ENCODE measurements at regions of chr14 and their contacts with region 1.

Region 1: DNA sequence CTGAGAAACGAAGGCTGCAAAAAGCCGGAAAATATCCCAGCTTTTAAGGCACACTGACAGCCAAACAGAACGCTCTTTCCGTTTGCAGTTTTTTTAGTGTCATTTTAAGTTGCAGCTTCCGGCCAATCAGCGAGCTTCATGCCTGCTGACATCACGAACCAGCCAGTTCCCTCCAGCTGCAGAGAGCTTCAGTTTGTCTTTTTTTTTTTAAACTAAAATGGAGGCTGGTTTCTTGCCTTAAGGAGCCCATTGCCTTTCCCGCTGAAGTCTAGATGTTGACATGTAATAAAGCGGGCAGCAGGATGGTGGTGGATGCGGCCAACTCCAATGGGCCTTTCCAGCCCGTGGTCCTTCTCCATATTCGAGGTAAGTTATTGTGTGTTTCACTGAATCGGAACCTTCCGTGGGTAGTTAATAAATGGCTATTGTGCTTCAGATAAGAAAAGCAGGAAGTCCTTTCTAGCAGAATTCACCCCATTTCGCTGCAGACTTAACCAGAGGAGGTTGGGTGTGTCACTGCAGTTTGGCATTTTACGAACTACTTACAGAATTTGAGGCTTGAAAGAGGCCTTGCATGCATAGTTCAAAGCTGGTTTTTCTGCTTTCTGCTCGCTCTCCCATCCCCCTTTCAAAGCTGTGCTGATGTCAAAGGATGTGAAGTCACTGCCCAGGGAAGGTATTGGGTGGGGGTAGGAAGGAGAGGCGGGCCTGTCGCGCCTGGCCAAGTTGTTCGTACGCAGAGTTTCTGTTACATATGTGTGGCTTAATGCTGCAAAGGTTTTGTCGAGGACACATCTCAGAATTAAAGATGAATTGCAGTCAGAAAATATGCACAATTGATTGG is 48.4 kb downstream of the PPP2R5C start:
- DNase-seq: peak; percentile 61 to 96 (median 90)
- ATAC-seq: peak; percentile 88 to 89 (median 88)
- H3K4me3 ChIP-seq: peak overlapping the region; percentile 69 to 74
- H3K4me3 Mint-ChIP-seq: peak overlapping the region; percentile 92 to 94 (median 94)
- H3K27ac ChIP-seq: peak overlapping the region; percentile 97
- H3K27ac Mint-ChIP-seq: peak overlapping the region; percentile 98 to 100
- H3K4me1 ChIP-seq: peaks cover 32 to 41% of the 10 kb centered on the region in 2 experiments
- H3K4me1 Mint-ChIP-seq: peaks cover 49 to 59% (median 52%) of the 10 kb centered on the region in 3 donors
- H3K27me3 ChIP-seq: no peaks in the 10 kb centered on the region
- H3K27me3 Mint-ChIP-seq: no peaks in the 10 kb centered on the region

Region 2: GRCh38 chr14:101721951-101722661 is 87.8 kb before region 1 on chr14:
- CTCF ChIA-PET with region 1: interaction called, 3 to 4 read pairs
- POLR2A ChIA-PET with region 1: interaction called, 6 to 12 read pairs
- DNase-seq: peak; percentile 52 to 94 (median 84)
- ATAC-seq: peak; percentile 83 to 87 (median 84)
- H3K4me3 ChIP-seq: peak overlapping the region; percentile 30 to 42
- H3K4me3 Mint-ChIP-seq: peak overlapping the region; percentile 75 to 78 (median 78)
- H3K27ac ChIP-seq: peak overlapping the region; percentile 99
- H3K27ac Mint-ChIP-seq: peak overlapping the region; percentile 99 to 100
- H3K4me1 ChIP-seq: peaks cover 18 to 67% of the 10 kb centered on the region in 2 experiments
- H3K4me1 Mint-ChIP-seq: peaks cover 56 to 73% (median 59%) of the 10 kb centered on the region in 3 donors
- H3K27me3 ChIP-seq: no peaks in the 10 kb centered on the region
- H3K27me3 Mint-ChIP-seq: no peaks in the 10 kb centered on the region

Region 3: GRCh38 chr14:101767618-101768362 is 42.1 kb before region 1 on chr14:
- CTCF ChIA-PET with region 1: interaction called in 1 of 2 experiments, 21 read pairs
- POLR2A ChIA-PET with region 1: interaction called, 3 to 11 read pairs
- DNase-seq: no peak
- ATAC-seq: no peak
- H3K4me3 ChIP-seq: no peak overlapping the region
- H3K4me3 Mint-ChIP-seq: no peak overlapping the region
- H3K27ac ChIP-seq: no peak overlapping the region
- H3K27ac Mint-ChIP-seq: no peak overlapping the region
- H3K4me1 ChIP-seq: peaks cover 0 to 24% of the 10 kb centered on the region in 2 experiments
- H3K4me1 Mint-ChIP-seq: peaks cover 29 to 54% (median 49%) of the 10 kb centered on the region in 3 donors
- H3K27me3 ChIP-seq: no peaks in the 10 kb centered on the region
- H3K27me3 Mint-ChIP-seq: no peaks in the 10 kb centered on the region

Region 4: DNA sequence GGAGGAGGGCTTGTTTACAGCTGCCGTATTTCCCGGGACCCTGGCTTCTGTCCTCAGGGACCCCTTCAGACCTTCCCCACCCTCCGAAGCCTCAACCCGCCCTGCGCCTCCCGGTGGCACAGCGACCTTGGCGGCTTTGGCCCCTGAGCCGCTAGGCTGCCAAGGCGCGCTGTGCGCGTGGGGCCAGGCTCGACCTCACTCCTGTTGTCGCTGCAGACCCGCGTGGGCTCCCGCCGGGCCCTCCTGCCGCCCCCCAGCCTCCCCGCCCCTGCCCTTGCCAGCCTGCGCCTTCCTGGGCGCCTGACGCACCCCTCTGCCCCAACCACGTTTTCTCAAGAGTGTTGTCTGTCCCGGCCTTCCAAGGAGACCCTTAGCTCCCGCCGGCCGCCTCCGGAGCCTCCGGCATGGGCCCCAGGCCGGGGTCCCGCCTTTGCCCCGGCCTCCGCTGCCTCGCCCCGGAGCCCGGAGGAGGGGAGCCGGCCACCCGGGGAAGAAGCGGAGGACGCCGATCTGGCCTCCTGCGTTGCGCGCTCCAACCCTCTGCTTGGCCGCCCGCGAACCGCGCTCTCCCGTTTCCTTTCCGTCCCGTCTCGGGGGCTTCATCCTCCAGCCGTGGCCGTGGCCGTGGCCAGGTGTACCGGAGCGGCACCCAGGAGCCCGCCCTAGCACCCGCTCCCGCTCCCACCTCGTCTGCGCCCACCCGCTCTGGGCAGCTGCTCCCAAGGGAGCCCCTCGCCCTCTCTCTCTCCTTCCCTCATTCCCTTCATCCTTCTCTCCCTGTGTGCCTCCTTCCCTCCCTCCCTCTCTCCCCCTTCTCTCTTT is 28.4 kb before region 1 on chr14:
- CTCF ChIA-PET with region 1: interaction called in 1 of 2 experiments, 5 read pairs
- POLR2A ChIA-PET with region 1: interaction called, 5 to 10 read pairs
- DNase-seq: peak in 20 of 35 experiments; percentile 9 to 48 (median 20)
- ATAC-seq: peak; percentile 69 to 74 (median 72)
- H3K4me3 ChIP-seq: peak overlapping the region; percentile 61 to 64
- H3K4me3 Mint-ChIP-seq: peak overlapping the region; percentile 65 to 76 (median 70)
- H3K27ac ChIP-seq: no peak overlapping the region
- H3K27ac Mint-ChIP-seq: no peak overlapping the region
- H3K4me1 ChIP-seq: peaks cover 0 to 16% of the 10 kb centered on the region in 2 experiments
- H3K4me1 Mint-ChIP-seq: peaks cover 33 to 44% (median 39%) of the 10 kb centered on the region in 3 donors
- H3K27me3 ChIP-seq: peaks cover 3 to 5% of the 10 kb centered on the region in 2 experiments
- H3K27me3 Mint-ChIP-seq: peaks cover 0 to 6% of the 10 kb centered on the region in 2 donors

Region 5: GRCh38 chr14:101823511-101824120 is 13.7 kb after region 1 on chr14:
- CTCF ChIA-PET with region 1: interaction called, 3 to 37 read pairs
- POLR2A ChIA-PET with region 1: interaction called, 41 to 277 read pairs
- DNase-seq: peak in 34 of 35 experiments; percentile 28 to 86 (median 64)
- ATAC-seq: peak; percentile 66 to 68 (median 67)
- H3K4me3 ChIP-seq: peak overlapping the region; percentile 60 to 70
- H3K4me3 Mint-ChIP-seq: peak overlapping the region; percentile 81 to 91 (median 88)
- H3K27ac ChIP-seq: peak overlapping the region; percentile 99
- H3K27ac Mint-ChIP-seq: peak overlapping the region; percentile 97
- H3K4me1 ChIP-seq: peaks cover 62 to 67% of the 10 kb centered on the region in 2 experiments
- H3K4me1 Mint-ChIP-seq: peaks cover 68 to 88% (median 77%) of the 10 kb centered on the region in 3 donors
- H3K27me3 ChIP-seq: no peaks in the 10 kb centered on the region
- H3K27me3 Mint-ChIP-seq: no peaks in the 10 kb centered on the region

Region 6: DNA sequence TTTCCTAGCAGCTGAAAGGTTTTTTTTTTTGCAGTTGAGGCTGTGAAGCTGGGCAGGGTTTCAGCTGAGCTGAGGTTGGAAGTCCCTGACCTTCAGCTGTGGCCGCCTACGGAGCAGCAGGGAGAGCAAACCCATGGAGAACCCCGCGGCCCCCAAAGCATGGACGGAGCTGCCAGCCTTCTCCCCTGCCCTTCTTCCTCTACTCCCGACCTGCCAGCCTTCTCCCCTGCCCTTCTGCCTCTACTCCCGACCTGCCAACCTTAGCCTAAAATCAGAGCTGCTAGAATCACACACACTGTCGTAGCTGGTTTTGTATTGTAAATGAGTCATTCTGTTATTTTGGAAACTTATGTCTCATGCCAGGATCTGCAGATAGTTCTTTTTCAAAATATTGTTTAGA is 26.2 kb after region 1 on chr14:
- CTCF ChIA-PET with region 1: interaction called in 1 of 2 experiments, 3 read pairs
- POLR2A ChIA-PET with region 1: interaction called, 5 to 27 read pairs
- DNase-seq: no peak
- ATAC-seq: no peak
- H3K4me3 ChIP-seq: no peak overlapping the region
- H3K4me3 Mint-ChIP-seq: peak overlapping the region in 1 of 3 donors; percentile 9
- H3K27ac ChIP-seq: peak overlapping the region; percentile 4
- H3K27ac Mint-ChIP-seq: peak overlapping the region; percentile 67 to 72
- H3K4me1 ChIP-seq: peaks cover 23 to 86% of the 10 kb centered on the region in 2 experiments
- H3K4me1 Mint-ChIP-seq: peaks cover 95 to 98% (median 95%) of the 10 kb centered on the region in 3 donors
- H3K27me3 ChIP-seq: no peaks in the 10 kb centered on the region
- H3K27me3 Mint-ChIP-seq: no peaks in the 10 kb centered on the region

Region 7: GRCh38 chr14:102255401-102256190 is 445.7 kb after region 1 on chr14:
- CTCF ChIA-PET with region 1: no interaction called
- POLR2A ChIA-PET with region 1: no interaction called
- DNase-seq: no peak
- ATAC-seq: no peak
- H3K4me3 ChIP-seq: no peak overlapping the region
- H3K4me3 Mint-ChIP-seq: no peak overlapping the region
- H3K27ac ChIP-seq: no peak overlapping the region
- H3K27ac Mint-ChIP-seq: no peak overlapping the region
- H3K4me1 ChIP-seq: no peaks in the 10 kb centered on the region
- H3K4me1 Mint-ChIP-seq: no peaks in the 10 kb centered on the region
- H3K27me3 ChIP-seq: peaks cover 0 to 8% of the 10 kb centered on the region in 2 experiments
- H3K27me3 Mint-ChIP-seq: no peaks in the 10 kb centered on the region

Region 8: GRCh38 chr14:102396521-102396920 is 586.6 kb after region 1 on chr14:
- CTCF ChIA-PET with region 1: no interaction called
- POLR2A ChIA-PET with region 1: interaction called in 1 of 2 experiments, 10 read pairs
- DNase-seq: no peak
- ATAC-seq: no peak
- H3K4me3 ChIP-seq: no peak overlapping the region
- H3K4me3 Mint-ChIP-seq: no peak overlapping the region
- H3K27ac ChIP-seq: no peak overlapping the region
- H3K27ac Mint-ChIP-seq: no peak overlapping the region
- H3K4me1 ChIP-seq: peaks cover 6 to 10% of the 10 kb centered on the region in 2 experiments
- H3K4me1 Mint-ChIP-seq: peaks cover 10 to 21% (median 13%) of the 10 kb centered on the region in 3 donors
- H3K27me3 ChIP-seq: no peaks in the 10 kb centered on the region
- H3K27me3 Mint-ChIP-seq: no peaks in the 10 kb centered on the region